IMR-90 (cell line): ENCODE measurements at regions of chr20 and their contacts with region 1.

Region 1: DNA sequence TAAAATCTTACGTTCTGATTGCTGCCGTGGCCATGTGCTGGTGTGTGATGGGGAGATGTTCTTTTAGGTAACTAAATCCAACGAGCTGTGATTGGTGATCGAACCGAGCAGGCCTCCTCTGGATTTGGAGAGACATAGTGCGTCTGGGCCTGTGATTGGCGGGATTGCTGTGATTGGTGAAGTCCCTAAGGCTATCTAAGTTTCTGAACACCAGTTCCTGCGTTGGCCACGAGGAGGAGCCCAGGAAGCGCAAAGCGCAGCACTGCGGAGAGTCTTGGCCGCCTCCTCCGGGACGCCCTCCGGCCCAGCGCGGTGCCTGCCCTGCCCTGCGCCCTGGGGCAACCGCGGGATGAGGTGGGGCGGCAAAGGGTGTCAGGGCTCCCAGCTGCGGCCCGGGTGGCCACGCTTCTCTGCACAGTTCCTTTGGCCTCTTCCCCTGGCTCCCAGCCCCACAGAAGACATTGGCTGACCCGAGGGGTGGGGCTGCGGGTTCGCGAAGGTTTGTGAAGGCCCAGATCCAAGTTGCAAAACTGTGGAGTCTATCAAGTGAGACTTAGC is 33.0 kb downstream of the HNF4A start:
- DNase-seq: peak; percentile 59
- ATAC-seq: peak; percentile 94
- H3K4me3 ChIP-seq: no peak overlapping the region
- H3K27ac ChIP-seq: no peak overlapping the region
- H3K4me1 ChIP-seq: no peaks in the 10 kb centered on the region
- H3K27me3 ChIP-seq: peaks cover 24% of the 10 kb centered on the region
- CTCF ChIP-seq: peak; percentile 87
- POLR2A ChIP-seq: no peak
- RAD21 ChIP-seq: peak; percentile 86

Region 2: GRCh38 chr20:44115762-44116644 is 272.5 kb before region 1 on chr20:
- CTCF ChIA-PET with region 1: no interaction called
- POLR2A ChIA-PET with region 1: no interaction called
- dilution Hi-C with region 1: no loop called
- in situ Hi-C with region 1: no loop called
- intact Hi-C with region 1: loop called (anchors 5 kb)
- DNase-seq: no peak
- ATAC-seq: peak; percentile 6; the same call in 1 of the 2 replicates
- H3K4me3 ChIP-seq: no peak overlapping the region
- H3K27ac ChIP-seq: no peak overlapping the region
- H3K4me1 ChIP-seq: peaks cover 1% of the 10 kb centered on the region; the same call in 1 of the 2 replicates
- H3K27me3 ChIP-seq: peaks cover 1% of the 10 kb centered on the region; the same call in 1 of the 2 replicates
- CTCF ChIP-seq: no peak
- POLR2A ChIP-seq: no peak
- RAD21 ChIP-seq: no peak

Region 3: GRCh38 chr20:44422083-44422482 is 33.5 kb after region 1 on chr20:
- CTCF ChIA-PET with region 1: no interaction called
- POLR2A ChIA-PET with region 1: no interaction called
- dilution Hi-C with region 1: no loop called
- in situ Hi-C with region 1: no loop called
- intact Hi-C with region 1: no loop called
- DNase-seq: peak; percentile 48
- ATAC-seq: peak; percentile 48
- H3K4me3 ChIP-seq: no peak overlapping the region
- H3K27ac ChIP-seq: no peak overlapping the region
- H3K4me1 ChIP-seq: no peaks in the 10 kb centered on the region
- H3K27me3 ChIP-seq: peaks cover 17% of the 10 kb centered on the region
- CTCF ChIP-seq: no peak
- POLR2A ChIP-seq: no peak
- RAD21 ChIP-seq: no peak

Region 4: GRCh38 chr20:44460795-44461141 is 72.2 kb after region 1 on chr20:
- CTCF ChIA-PET with region 1: no interaction called
- POLR2A ChIA-PET with region 1: no interaction called
- dilution Hi-C with region 1: loop called (anchors 10 kb)
- in situ Hi-C with region 1: no loop called
- intact Hi-C with region 1: loop called (anchors 1 kb)
- DNase-seq: peak; percentile 23
- ATAC-seq: peak; percentile 76
- H3K4me3 ChIP-seq: no peak overlapping the region
- H3K27ac ChIP-seq: no peak overlapping the region
- H3K4me1 ChIP-seq: no peaks in the 10 kb centered on the region
- H3K27me3 ChIP-seq: peaks cover 14% of the 10 kb centered on the region
- CTCF ChIP-seq: peak; percentile 57
- POLR2A ChIP-seq: no peak
- RAD21 ChIP-seq: peak; percentile 60

Region 5: GRCh38 chr20:44609511-44610312 is 221.2 kb after region 1 on chr20:
- CTCF ChIA-PET with region 1: interaction called, 8 read pairs
- POLR2A ChIA-PET with region 1: no interaction called
- dilution Hi-C with region 1: no loop called
- in situ Hi-C with region 1: loop called (anchors 5 kb)
- intact Hi-C with region 1: loop called (anchors 1 kb)
- DNase-seq: peak; percentile 78
- ATAC-seq: peak; percentile 100
- H3K4me3 ChIP-seq: no peak overlapping the region
- H3K27ac ChIP-seq: peak overlapping the region; percentile 46
- H3K4me1 ChIP-seq: peaks cover 9% of the 10 kb centered on the region
- H3K27me3 ChIP-seq: no peaks in the 10 kb centered on the region
- CTCF ChIP-seq: peak; percentile 99
- POLR2A ChIP-seq: peak; percentile 64
- RAD21 ChIP-seq: peak; percentile 100

Region 6: GRCh38 chr20:44861531-44862006 is 473.0 kb after region 1 on chr20:
- CTCF ChIA-PET with region 1: no interaction called
- POLR2A ChIA-PET with region 1: no interaction called
- dilution Hi-C with region 1: no loop called
- in situ Hi-C with region 1: loop called (anchors 25 kb)
- intact Hi-C with region 1: loop called (anchors 2 kb)
- DNase-seq: peak; percentile 18
- ATAC-seq: peak; percentile 53
- H3K4me3 ChIP-seq: no peak overlapping the region
- H3K27ac ChIP-seq: no peak overlapping the region
- H3K4me1 ChIP-seq: 0 out of 2 replicates have a peak, but pooled peaks cover 2% of the 10 kb centered on the region
- H3K27me3 ChIP-seq: peaks cover 9% of the 10 kb centered on the region
- CTCF ChIP-seq: no peak
- POLR2A ChIP-seq: no peak
- RAD21 ChIP-seq: no peak